MCF 10A (cell line): ENCODE measurements at regions of chr6 and their contacts with region 1.

Region 1: GRCh38 chr6:161618831-161619454 is 345.1 kb upstream of the AGPAT4 start:
- DNase-seq: peak; percentile 76
- H3K4me3 Mint-ChIP-seq: peak overlapping the region; percentile 49
- H3K27ac Mint-ChIP-seq: no peak overlapping the region
- H3K4me1 Mint-ChIP-seq: no peaks in the 10 kb centered on the region
- H3K27me3 Mint-ChIP-seq: no peaks in the 10 kb centered on the region
- CTCF ChIP-seq: peak; percentile 63

Region 2: DNA sequence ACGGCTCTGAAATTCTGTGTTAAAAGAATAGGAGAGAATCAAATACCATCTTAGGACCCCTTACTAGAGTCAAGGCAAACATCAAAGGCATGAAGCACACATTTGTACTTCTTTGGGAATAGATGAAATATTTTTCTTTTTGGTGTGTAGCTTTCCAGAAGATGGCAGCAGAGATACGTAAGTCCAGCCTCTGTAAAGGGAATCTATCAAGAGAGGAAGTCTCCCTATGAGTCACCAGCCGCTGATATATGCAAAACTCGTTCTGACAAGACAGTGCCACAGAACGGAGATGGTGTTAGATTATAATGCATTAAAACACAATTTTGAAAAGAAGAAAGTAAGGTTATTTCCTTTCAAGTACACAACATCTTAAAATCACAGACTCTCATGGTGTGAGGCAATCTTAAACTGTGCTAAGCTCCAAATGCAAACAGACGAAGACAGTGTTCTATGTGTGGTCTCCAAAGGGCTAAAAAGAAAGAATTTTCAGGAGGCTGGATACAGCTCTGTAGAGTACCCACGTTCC is 225.0 kb before region 1 on chr6:
- CTCF ChIA-PET with region 1: interaction called, 12 read pairs
- POLR2A ChIA-PET with region 1: no interaction called
- intact Hi-C with region 1: loop called (anchors 5 kb)
- DNase-seq: peak; percentile 91
- H3K4me3 Mint-ChIP-seq: no peak overlapping the region
- H3K27ac Mint-ChIP-seq: no peak overlapping the region
- H3K4me1 Mint-ChIP-seq: peaks cover 7% of the 10 kb centered on the region
- H3K27me3 Mint-ChIP-seq: no peaks in the 10 kb centered on the region
- CTCF ChIP-seq: peak; percentile 56

Region 3: DNA sequence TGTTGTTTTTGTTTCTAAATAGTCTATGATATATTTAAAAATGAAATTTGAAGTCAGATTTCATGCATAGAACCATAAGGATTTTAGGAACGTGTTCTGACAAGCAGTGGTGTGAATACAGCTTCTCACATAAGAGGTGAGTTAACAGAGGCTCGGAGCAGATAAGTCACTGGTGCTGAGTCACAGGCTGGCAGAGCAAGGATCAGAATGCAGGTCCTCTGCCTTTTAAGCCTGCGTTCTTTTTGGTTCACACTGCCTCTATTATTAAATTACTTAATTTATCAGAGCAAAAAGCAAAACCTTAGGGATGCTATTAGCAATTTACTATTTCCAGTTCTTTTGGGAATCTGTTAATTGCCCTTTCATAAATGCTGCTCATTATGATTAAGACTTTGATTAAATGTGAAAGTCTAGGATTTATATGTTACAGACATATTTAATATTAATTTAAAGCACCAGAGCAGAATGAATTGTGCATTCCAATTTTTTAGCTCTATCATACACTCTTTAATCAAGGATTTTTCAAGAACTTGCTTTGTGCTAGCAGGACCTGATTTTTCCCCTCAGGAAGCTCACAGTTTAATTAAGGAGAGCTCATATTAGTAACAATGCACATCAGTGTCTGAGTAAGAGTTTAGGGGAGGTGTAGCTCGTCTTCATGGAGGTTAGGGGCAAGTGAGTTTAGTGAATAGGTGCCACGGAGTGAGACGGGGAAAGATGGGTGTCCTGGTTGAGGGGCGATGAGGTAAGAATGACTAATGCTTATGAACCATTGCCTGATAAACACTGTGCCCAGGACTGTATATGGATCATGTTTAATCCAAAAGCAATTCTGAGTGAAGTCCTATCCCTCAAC is 132.4 kb before region 1 on chr6:
- CTCF ChIA-PET with region 1: no interaction called
- POLR2A ChIA-PET with region 1: interaction called, 3 read pairs
- intact Hi-C with region 1: loop called (anchors 1 kb)
- DNase-seq: peak; percentile 84
- H3K4me3 Mint-ChIP-seq: no peak overlapping the region
- H3K27ac Mint-ChIP-seq: peak overlapping the region; percentile 23
- H3K4me1 Mint-ChIP-seq: peaks cover 8% of the 10 kb centered on the region
- H3K27me3 Mint-ChIP-seq: no peaks in the 10 kb centered on the region
- CTCF ChIP-seq: no peak

Region 4: DNA sequence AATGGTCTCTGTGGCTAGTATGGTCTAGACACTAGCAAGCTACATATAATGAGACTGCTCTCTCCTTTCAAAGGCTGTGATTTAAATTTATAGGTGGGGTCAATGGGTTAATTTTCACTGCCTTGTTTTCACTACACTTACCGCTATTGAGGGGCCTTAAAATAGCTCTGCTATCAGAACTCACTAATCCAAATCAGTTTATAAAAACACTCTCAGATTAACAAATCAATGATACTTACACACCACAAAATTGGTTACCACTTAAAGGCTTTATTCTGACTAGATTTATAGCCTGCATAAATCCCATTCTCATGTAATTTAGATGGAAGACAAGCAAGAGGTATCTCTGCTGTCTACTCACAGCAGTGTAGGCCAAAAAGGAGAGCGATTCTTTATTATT is 32.1 kb before region 1 on chr6:
- CTCF ChIA-PET with region 1: interaction called, 12 read pairs
- POLR2A ChIA-PET with region 1: no interaction called
- intact Hi-C with region 1: no loop called
- DNase-seq: no peak
- H3K4me3 Mint-ChIP-seq: no peak overlapping the region
- H3K27ac Mint-ChIP-seq: no peak overlapping the region
- H3K4me1 Mint-ChIP-seq: peaks cover 6% of the 10 kb centered on the region
- H3K27me3 Mint-ChIP-seq: no peaks in the 10 kb centered on the region
- CTCF ChIP-seq: no peak

Region 5: GRCh38 chr6:161607696-161608297 is 11.1 kb before region 1 on chr6:
- CTCF ChIA-PET with region 1: interaction called, 12 read pairs
- POLR2A ChIA-PET with region 1: no interaction called
- intact Hi-C with region 1: no loop called
- DNase-seq: no peak
- H3K4me3 Mint-ChIP-seq: no peak overlapping the region
- H3K27ac Mint-ChIP-seq: no peak overlapping the region
- H3K4me1 Mint-ChIP-seq: no peaks in the 10 kb centered on the region
- H3K27me3 Mint-ChIP-seq: no peaks in the 10 kb centered on the region
- CTCF ChIP-seq: no peak

Region 6: GRCh38 chr6:161694995-161695394 is 76.1 kb after region 1 on chr6:
- CTCF ChIA-PET with region 1: interaction called, 8 read pairs
- POLR2A ChIA-PET with region 1: no interaction called
- intact Hi-C with region 1: loop called (anchors 1 kb)
- DNase-seq: peak; percentile 45
- H3K4me3 Mint-ChIP-seq: no peak overlapping the region
- H3K27ac Mint-ChIP-seq: no peak overlapping the region
- H3K4me1 Mint-ChIP-seq: no peaks in the 10 kb centered on the region
- H3K27me3 Mint-ChIP-seq: no peaks in the 10 kb centered on the region
- CTCF ChIP-seq: peak; percentile 35

Region 7: DNA sequence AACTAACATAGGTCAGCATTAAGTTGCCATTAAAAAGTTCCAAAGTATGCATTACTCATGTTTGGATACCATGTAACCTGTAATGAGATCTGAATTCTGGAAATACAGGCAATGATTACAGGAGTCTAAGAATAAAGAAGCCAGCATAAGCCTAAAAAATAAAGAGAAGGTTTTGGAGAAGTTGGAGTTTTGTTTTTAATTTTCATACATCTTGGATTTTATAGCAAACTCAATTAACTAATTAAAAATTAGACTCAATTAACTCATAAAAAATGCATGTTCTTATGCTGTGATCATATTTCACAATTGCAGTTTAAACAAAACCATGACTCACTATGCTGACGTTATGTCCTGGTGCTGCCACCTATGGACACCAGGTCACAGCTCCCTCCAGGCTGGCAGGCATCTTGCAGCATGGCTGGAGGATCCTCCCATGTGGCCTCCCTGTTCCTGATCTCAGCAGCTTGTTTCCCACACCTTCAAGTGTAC is 303.7 kb after region 1 on chr6:
- CTCF ChIA-PET with region 1: interaction called, 7 read pairs
- POLR2A ChIA-PET with region 1: no interaction called
- intact Hi-C with region 1: loop called (anchors 5 kb)
- DNase-seq: peak; percentile 88
- H3K4me3 Mint-ChIP-seq: no peak overlapping the region
- H3K27ac Mint-ChIP-seq: peak overlapping the region; percentile 77
- H3K4me1 Mint-ChIP-seq: peaks cover 17% of the 10 kb centered on the region
- H3K27me3 Mint-ChIP-seq: no peaks in the 10 kb centered on the region
- CTCF ChIP-seq: peak; percentile 30